ENCODE measurements at regions of chr15 and their contacts with region 1.

Region 1: DNA sequence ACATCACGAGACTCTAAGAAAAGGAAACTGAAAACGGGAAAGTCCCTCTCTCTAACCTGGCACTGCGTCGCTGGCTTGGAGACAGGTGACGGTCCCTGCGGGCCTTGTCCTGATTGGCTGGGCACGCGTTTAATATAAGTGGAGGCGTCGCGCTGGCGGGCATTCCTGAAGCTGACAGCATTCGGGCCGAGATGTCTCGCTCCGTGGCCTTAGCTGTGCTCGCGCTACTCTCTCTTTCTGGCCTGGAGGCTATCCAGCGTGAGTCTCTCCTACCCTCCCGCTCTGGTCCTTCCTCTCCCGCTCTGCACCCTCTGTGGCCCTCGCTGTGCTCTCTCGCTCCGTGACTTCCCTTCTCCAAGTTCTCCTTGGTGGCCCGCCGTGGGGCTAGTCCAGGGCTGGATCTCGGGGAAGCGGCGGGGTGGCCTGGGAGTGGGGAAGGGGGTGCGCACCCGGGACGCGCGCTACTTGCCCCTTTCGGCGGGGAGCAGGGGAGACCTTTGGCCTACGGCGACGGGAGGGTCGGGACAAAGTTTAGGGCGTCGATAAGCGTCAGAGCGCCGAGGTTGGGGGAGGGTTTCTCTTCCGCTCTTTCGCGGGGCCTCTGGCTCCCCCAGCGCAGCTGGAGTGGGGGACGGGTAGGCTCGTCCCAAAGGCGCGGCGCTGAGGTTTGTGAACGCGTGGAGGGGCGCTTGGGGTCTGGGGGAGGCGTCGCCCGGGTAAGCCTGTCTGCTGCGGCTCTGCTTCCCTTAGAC is at the start of gene B2M:
- DNase-seq: peak; percentile 94 to 97 (median 96)
- H3K4me3 ChIP-seq: peak within 1 kb of the TSS; percentile 63
- H3K27ac ChIP-seq: peak within 1 kb of the TSS; percentile 92 to 95
- H3K4me1 ChIP-seq: peaks cover 3% of the 10 kb centered on the region
- H3K27me3 ChIP-seq: no peaks in the 10 kb centered on the region
- CTCF ChIP-seq: no peak
- EP300 ChIP-seq: no peak
- POLR2A ChIP-seq: peak; percentile 99
- total RNA-seq, gene B2M: 827 to 3,158 (median 1,148) TPM

Region 2: GRCh38 chr15:44763187-44763586 is 51.7 kb after region 1 on chr15:
- intact Hi-C with region 1: no loop called
- DNase-seq: no peak
- H3K4me3 ChIP-seq: no peak overlapping the region
- H3K27ac ChIP-seq: no peak overlapping the region
- H3K4me1 ChIP-seq: no peaks in the 10 kb centered on the region
- H3K27me3 ChIP-seq: no peaks in the 10 kb centered on the region
- CTCF ChIP-seq: no peak
- EP300 ChIP-seq: no peak
- POLR2A ChIP-seq: no peak

Region 3: GRCh38 chr15:45187894-45188830 is 476.6 kb after region 1 on chr15 and contains the start of gene SHF:
- intact Hi-C with region 1: loop called in 1 of 4 experiments (anchors 10 kb)
- DNase-seq: peak; percentile 83 to 87 (median 84)
- H3K4me3 ChIP-seq: peak within 1 kb of the TSS; percentile 94
- H3K27ac ChIP-seq: peak within 1 kb of the TSS; percentile 86 to 97
- H3K4me1 ChIP-seq: peaks cover 4% of the 10 kb centered on the region
- H3K27me3 ChIP-seq: no peaks in the 10 kb centered on the region
- CTCF ChIP-seq: no peak
- EP300 ChIP-seq: no peak
- POLR2A ChIP-seq: peak; percentile 48
- total RNA-seq, gene SHF: 18.3 to 45.3 (median 30.5) TPM

Measured in ovary (tissue), 10 donors.